B cell (primary cell): ENCODE measurements at regions of chr15 and their contacts with region 1.

Region 1: DNA sequence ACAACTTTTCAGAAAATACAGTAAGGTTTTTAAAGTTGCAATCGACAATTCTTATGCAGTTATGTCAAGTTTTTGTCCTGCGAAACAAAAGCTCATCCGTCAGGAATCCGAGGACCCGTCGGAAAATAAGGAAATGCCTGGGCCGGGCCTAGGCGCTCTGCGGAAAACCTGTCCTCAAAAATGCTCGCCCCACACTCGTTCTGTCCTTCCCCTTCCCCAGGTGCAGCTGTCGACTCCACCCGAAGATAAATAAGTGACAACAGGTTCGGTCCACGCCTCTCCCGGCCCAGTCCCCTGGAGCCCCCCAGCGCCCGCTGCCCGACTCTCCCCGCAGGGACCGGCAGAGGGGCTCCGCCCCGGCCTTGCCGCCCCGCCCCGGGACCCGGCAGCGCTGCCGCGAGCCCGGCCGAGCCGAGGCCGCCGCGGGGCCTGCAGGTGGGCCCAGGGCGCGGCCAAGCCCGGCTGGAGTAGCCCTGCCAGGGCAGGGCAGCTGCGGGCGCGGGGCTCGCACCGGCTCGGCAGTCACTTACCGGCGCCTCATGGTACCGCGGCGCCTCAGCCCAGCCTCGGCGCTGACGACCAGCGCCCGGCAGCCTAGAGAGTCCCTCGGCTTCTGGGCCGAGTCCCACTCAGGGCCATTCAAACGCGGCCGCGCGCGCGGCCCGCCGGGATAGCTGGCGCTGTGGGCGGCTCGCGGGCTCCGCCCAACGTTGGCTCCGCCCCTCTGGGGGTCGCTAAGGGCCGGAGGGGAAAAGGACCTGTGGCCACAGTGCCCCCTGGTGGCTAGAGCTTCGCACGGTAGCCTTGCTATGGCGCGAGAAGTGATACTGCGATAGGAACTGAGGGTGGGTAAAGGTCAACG is at the start of gene KATNBL1:
- DNase-seq: peak; percentile 97
- ATAC-seq: peak; percentile 92
- H3K4me3 ChIP-seq: peak within 1 kb of the TSS; percentile 53 to 74 (median 65)
- H3K4me3 Mint-ChIP-seq: peak within 1 kb of the TSS; percentile 93
- H3K27ac ChIP-seq: peak within 1 kb of the TSS; percentile 51 to 80
- H3K27ac Mint-ChIP-seq: peak within 1 kb of the TSS; percentile 89
- H3K4me1 ChIP-seq: peaks cover 9 to 10% of the 10 kb centered on the region in 2 donors
- H3K4me1 Mint-ChIP-seq: peaks cover 15% of the 10 kb centered on the region
- H3K27me3 ChIP-seq: no peaks in the 10 kb centered on the region
- H3K27me3 Mint-ChIP-seq: no peaks in the 10 kb centered on the region
- CTCF ChIP-seq: peak; percentile 85
- total RNA-seq, gene KATNBL1: 54.8 and 57.8 TPM in 2 replicates

Region 2: GRCh38 chr15:34038023-34038870 is 171.4 kb before region 1 on chr15:
- CTCF ChIA-PET with region 1: interaction called, 4 read pairs
- POLR2A ChIA-PET with region 1: no interaction called
- intact Hi-C with region 1: loop called (anchors 1 kb)
- DNase-seq: peak; percentile 89
- ATAC-seq: peak; percentile 78
- H3K4me3 ChIP-seq: peak overlapping the region; percentile 63 to 98 (median 66)
- H3K4me3 Mint-ChIP-seq: peak overlapping the region; percentile 97
- H3K27ac ChIP-seq: peak overlapping the region; percentile 49 to 78
- H3K27ac Mint-ChIP-seq: peak overlapping the region; percentile 96
- H3K4me1 ChIP-seq: peaks cover 14 to 15% of the 10 kb centered on the region in 2 donors
- H3K4me1 Mint-ChIP-seq: peaks cover 18% of the 10 kb centered on the region
- H3K27me3 ChIP-seq: no peaks in the 10 kb centered on the region
- H3K27me3 Mint-ChIP-seq: no peaks in the 10 kb centered on the region
- CTCF ChIP-seq: no peak

Region 3: DNA sequence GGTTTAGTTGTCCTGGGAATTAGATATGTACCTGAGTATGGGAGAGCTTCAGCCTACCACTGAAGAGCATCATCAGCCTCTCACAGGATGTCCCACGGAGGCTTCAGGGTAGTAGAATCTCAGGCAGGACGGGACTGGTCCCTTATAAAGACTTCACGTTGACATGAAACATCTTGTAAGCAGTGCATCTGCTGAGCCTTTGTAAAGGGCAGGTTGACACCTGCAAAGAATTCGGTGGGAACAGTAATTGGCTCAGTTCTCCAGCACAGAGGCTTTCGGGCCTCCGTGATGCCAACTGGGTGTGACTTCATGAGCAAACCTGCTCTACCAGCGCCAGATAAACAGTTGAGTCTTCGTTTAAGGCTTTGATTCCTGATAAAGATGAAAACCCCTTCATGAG is 143.7 kb before region 1 on chr15:
- CTCF ChIA-PET with region 1: interaction called, 57 read pairs
- POLR2A ChIA-PET with region 1: no interaction called
- intact Hi-C with region 1: no loop called
- DNase-seq: no peak
- ATAC-seq: no peak
- H3K4me3 ChIP-seq: no peak overlapping the region
- H3K4me3 Mint-ChIP-seq: no peak overlapping the region
- H3K27ac ChIP-seq: no peak overlapping the region
- H3K27ac Mint-ChIP-seq: no peak overlapping the region
- H3K4me1 ChIP-seq: peaks cover 0 to 4% of the 10 kb centered on the region in 2 donors
- H3K4me1 Mint-ChIP-seq: peaks cover 4% of the 10 kb centered on the region
- H3K27me3 ChIP-seq: no peaks in the 10 kb centered on the region
- H3K27me3 Mint-ChIP-seq: no peaks in the 10 kb centered on the region
- CTCF ChIP-seq: no peak

Region 4: GRCh38 chr15:34109797-34110663 is 99.6 kb before region 1 on chr15:
- CTCF ChIA-PET with region 1: interaction called, 30 read pairs
- POLR2A ChIA-PET with region 1: no interaction called
- intact Hi-C with region 1: loop called (anchors 1 kb)
- DNase-seq: peak; percentile 38
- ATAC-seq: peak; percentile 54
- H3K4me3 ChIP-seq: no peak overlapping the region
- H3K4me3 Mint-ChIP-seq: no peak overlapping the region
- H3K27ac ChIP-seq: no peak overlapping the region
- H3K27ac Mint-ChIP-seq: no peak overlapping the region
- H3K4me1 ChIP-seq: no peaks in the 10 kb centered on the region
- H3K4me1 Mint-ChIP-seq: no peaks in the 10 kb centered on the region
- H3K27me3 ChIP-seq: no peaks in the 10 kb centered on the region
- H3K27me3 Mint-ChIP-seq: peaks cover 10% of the 10 kb centered on the region
- CTCF ChIP-seq: peak; percentile 57

Region 5: GRCh38 chr15:34154725-34155204 is 54.9 kb before region 1 on chr15:
- CTCF ChIA-PET with region 1: no interaction called
- POLR2A ChIA-PET with region 1: no interaction called
- intact Hi-C with region 1: no loop called
- DNase-seq: peak; percentile 6
- ATAC-seq: peak; percentile 28
- H3K4me3 ChIP-seq: no peak overlapping the region
- H3K4me3 Mint-ChIP-seq: no peak overlapping the region
- H3K27ac ChIP-seq: peak overlapping the region; percentile 5 to 61
- H3K27ac Mint-ChIP-seq: peak overlapping the region; percentile 59
- H3K4me1 ChIP-seq: peaks cover 0 to 5% of the 10 kb centered on the region in 2 donors
- H3K4me1 Mint-ChIP-seq: peaks cover 18% of the 10 kb centered on the region
- H3K27me3 ChIP-seq: no peaks in the 10 kb centered on the region
- H3K27me3 Mint-ChIP-seq: no peaks in the 10 kb centered on the region
- CTCF ChIP-seq: no peak

Region 6: DNA sequence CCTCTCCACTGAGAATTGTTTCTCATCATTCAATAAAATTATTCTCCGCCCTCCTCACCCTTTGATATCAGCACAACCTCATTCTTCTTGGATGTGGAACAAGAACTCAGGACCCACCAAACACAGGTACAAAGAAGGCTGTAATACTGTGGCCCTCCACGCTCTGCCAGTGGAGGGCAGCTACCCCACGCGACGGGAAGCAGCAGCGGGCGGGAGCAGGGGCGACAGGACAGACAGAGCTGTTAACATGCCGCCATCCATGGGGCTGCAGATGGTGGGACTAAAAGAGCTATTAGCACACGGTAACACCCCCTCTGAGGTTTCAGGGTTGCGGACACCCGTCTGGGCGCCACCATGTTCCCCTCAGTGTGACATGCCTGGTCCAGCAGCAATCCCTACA is 52.7 kb after region 1 on chr15:
- CTCF ChIA-PET with region 1: no interaction called
- POLR2A ChIA-PET with region 1: no interaction called
- intact Hi-C with region 1: no loop called
- DNase-seq: no peak
- ATAC-seq: no peak
- H3K4me3 ChIP-seq: no peak overlapping the region
- H3K4me3 Mint-ChIP-seq: no peak overlapping the region
- H3K27ac ChIP-seq: no peak overlapping the region
- H3K27ac Mint-ChIP-seq: peak overlapping the region; percentile 2
- H3K4me1 ChIP-seq: no peaks in the 10 kb centered on the region
- H3K4me1 Mint-ChIP-seq: no peaks in the 10 kb centered on the region
- H3K27me3 ChIP-seq: no peaks in the 10 kb centered on the region
- H3K27me3 Mint-ChIP-seq: no peaks in the 10 kb centered on the region
- CTCF ChIP-seq: no peak

Region 7: GRCh38 chr15:34337557-34338306 is 128.1 kb after region 1 on chr15 and contains the start of gene SLC12A6:
- CTCF ChIA-PET with region 1: interaction called, 8 read pairs
- POLR2A ChIA-PET with region 1: no interaction called
- intact Hi-C with region 1: loop called (anchors 1 kb)
- DNase-seq: peak; percentile 97
- ATAC-seq: peak; percentile 84
- H3K4me3 ChIP-seq: peak within 1 kb of the TSS; percentile 96 to 98 (median 97)
- H3K4me3 Mint-ChIP-seq: peak within 1 kb of the TSS; percentile 100
- H3K27ac ChIP-seq: peak within 1 kb of the TSS; percentile 87 to 93
- H3K27ac Mint-ChIP-seq: peak within 1 kb of the TSS; percentile 99
- H3K4me1 ChIP-seq: peaks cover 34 to 37% of the 10 kb centered on the region in 2 donors
- H3K4me1 Mint-ChIP-seq: peaks cover 48% of the 10 kb centered on the region
- H3K27me3 ChIP-seq: no peaks in the 10 kb centered on the region
- H3K27me3 Mint-ChIP-seq: no peaks in the 10 kb centered on the region
- CTCF ChIP-seq: no peak
- total RNA-seq, gene SLC12A6: 141 and 156 TPM in 2 replicates